Body of pancreas (tissue), 4 donors: ENCODE measurements at regions of chr5 and their contacts with region 1.

Region 1: DNA sequence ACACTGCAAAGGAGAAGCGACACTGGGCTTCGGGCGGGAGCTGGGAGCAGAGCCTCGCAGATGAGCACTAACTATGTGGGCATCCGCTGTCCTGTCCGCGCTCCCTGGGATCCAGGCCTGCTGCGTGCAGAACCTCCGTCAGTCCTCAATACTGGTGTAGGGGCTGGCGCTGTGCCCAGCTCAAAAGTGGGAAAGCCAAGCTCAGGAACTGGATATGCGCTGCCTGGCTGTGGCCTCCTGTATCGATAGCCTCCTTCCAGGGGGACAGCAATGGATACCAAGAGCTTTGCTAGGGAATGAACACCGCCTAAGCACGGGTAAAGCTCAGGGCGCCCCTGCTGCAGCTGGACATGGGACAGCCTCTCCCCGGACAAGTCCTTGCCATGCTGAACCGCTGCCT is 270.4 kb downstream of the NSG2 start:
- DNase-seq: no peak
- ATAC-seq: no peak
- H3K4me3 ChIP-seq: no peak overlapping the region
- H3K27ac ChIP-seq: no peak overlapping the region
- H3K4me1 ChIP-seq: peaks cover 10% of the 10 kb centered on the region
- H3K27me3 ChIP-seq: peaks cover 0 to 8% of the 10 kb centered on the region in 2 donors
- CTCF ChIP-seq: no peak
- POLR2A ChIP-seq: no peak

Region 2: GRCh38 chr5:174045470-174046025 is 270.3 kb before region 1 on chr5 and contains the start of gene NSG2:
- intact Hi-C with region 1: loop called (anchors 2 kb)
- DNase-seq: peak; percentile 84 to 93 (median 92)
- ATAC-seq: peak; percentile 97
- H3K4me3 ChIP-seq: no peak within 1 kb of the TSS
- H3K27ac ChIP-seq: no peak within 1 kb of the TSS
- H3K4me1 ChIP-seq: no peaks in the 10 kb centered on the region
- H3K27me3 ChIP-seq: no peaks in the 10 kb centered on the region
- CTCF ChIP-seq: peak; percentile 49 to 96 (median 90)
- POLR2A ChIP-seq: no peak
- total RNA-seq, gene NSG2: 2.9 TPM in 1 of 2 donors, not detected in the other

Region 3: DNA sequence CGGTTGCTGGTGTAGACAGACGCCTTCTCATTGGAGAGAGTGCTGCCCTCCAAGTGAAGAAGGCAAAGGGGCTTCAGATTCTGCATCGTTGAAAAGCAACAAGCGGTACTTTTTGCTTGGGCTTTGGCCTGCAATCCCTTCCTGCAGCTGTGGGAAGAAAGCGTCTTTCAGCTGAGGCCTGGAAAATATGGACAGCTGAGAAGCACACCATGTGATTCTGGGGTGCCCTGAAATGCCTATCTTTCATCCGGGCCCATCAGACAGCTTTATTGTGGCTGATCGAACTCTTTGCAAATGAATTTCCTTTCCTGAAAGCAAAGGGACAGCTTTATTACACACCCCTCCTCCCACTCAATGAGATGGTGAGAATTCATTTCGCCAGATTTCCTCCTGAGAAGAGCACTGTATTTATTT is 196.4 kb before region 1 on chr5:
- intact Hi-C with region 1: no loop called
- DNase-seq: no peak
- ATAC-seq: no peak
- H3K4me3 ChIP-seq: no peak overlapping the region
- H3K27ac ChIP-seq: no peak overlapping the region
- H3K4me1 ChIP-seq: no peaks in the 10 kb centered on the region
- H3K27me3 ChIP-seq: no peaks in the 10 kb centered on the region
- CTCF ChIP-seq: no peak
- POLR2A ChIP-seq: no peak